ENCODE measurements at regions of chr10 and their contacts with region 1.

Region 1: DNA sequence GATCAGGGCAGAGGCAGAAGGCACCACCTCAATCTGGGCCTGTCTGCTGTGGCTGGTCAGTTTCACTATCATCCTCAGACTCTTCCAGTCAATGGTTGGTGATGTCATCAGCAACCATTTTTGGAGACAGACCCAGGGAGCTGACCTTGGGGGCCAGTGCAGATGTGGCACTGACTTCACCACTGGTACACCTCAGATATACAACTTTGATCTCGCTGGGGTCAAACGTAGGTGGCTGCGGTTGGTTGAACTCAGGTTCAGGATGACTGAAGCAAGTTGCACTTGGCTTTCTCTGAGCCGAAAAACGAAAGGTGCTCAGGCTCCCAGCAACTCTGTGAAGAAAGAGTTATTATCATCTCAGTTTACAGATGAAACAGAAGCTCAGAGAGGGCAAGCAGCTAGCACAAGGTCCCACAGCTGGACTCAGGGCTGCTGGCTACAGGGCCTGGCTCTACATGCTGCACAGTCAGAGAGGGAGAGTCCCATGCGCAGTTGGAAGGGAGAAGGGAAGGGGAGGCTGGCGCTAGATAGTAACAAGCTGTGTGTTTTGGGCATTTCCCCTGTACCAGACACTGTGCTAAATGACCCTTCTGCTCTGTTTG is 27.2 kb downstream of the ANKRD16 start:
- DNase-seq: peak; percentile 86
- CTCF ChIP-seq: no peak

Region 2: GRCh38 chr10:5818894-5819293 is 43.6 kb before region 1 on chr10:
- CTCF ChIA-PET with region 1: interaction called, 10 read pairs
- POLR2A ChIA-PET with region 1: interaction called, 4 read pairs
- DNase-seq: peak; percentile 44
- CTCF ChIP-seq: no peak

Region 3: GRCh38 chr10:5840314-5841307 is 21.9 kb before region 1 on chr10:
- CTCF ChIA-PET with region 1: interaction called, 24 read pairs
- POLR2A ChIA-PET with region 1: interaction called, 7 read pairs
- DNase-seq: peak; percentile 83
- CTCF ChIP-seq: no peak

Measured in GM10248 (cell line).